ENCODE measurements at regions of chr18 and their contacts with region 1.

Region 1: DNA sequence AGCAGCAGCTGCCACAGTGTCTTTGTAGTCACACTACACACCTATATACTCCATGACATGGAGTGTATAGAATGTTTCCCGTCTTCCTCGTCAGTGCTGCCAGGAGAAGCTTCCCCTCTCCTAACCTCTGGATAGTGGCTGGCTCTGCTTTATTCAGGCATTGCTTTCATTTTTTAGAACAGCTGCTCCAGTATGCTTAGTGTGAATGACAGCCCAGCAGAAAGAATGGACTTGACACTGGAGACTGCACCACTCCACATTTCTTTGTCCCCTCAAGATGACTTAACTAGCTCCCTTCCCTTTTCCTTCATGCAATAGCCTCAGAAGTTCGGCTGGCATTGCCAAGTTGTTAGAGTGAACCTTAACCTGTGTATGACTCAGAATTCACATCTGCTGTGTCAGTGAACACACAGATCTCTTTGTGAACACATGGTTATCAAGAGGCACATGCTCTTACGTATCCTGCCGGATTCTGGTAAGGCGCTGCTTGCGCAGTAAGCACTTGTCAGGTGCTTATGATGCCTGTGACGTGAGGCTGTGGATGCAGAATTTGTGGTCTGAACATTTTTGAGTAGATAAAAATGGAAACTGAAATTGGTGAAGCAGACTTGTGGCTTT is 73.9 kb downstream of the NEDD4L start:
- DNase-seq: no peak
- ATAC-seq: no peak
- H3K4me3 ChIP-seq: no peak overlapping the region
- H3K4me3 Mint-ChIP-seq: no peak overlapping the region
- H3K27ac ChIP-seq: no peak overlapping the region
- H3K27ac Mint-ChIP-seq: no peak overlapping the region
- H3K4me1 ChIP-seq: no peaks in the 10 kb centered on the region
- H3K4me1 Mint-ChIP-seq: peaks cover 4% of the 10 kb centered on the region
- H3K27me3 ChIP-seq: no peaks in the 10 kb centered on the region
- H3K27me3 Mint-ChIP-seq: no peaks in the 10 kb centered on the region
- CTCF ChIP-seq: no peak

Region 2: GRCh38 chr18:57035590-57035989 is 1082.3 kb before region 1 on chr18:
- CTCF ChIA-PET with region 1: no interaction called
- POLR2A ChIA-PET with region 1: no interaction called
- intact Hi-C with region 1: no loop called
- DNase-seq: no peak
- ATAC-seq: no peak
- H3K4me3 ChIP-seq: no peak overlapping the region
- H3K4me3 Mint-ChIP-seq: no peak overlapping the region
- H3K27ac ChIP-seq: no peak overlapping the region
- H3K27ac Mint-ChIP-seq: no peak overlapping the region
- H3K4me1 ChIP-seq: no peaks in the 10 kb centered on the region
- H3K4me1 Mint-ChIP-seq: no peaks in the 10 kb centered on the region
- H3K27me3 ChIP-seq: no peaks in the 10 kb centered on the region
- H3K27me3 Mint-ChIP-seq: peaks cover 4% of the 10 kb centered on the region
- CTCF ChIP-seq: no peak

Region 3: GRCh38 chr18:57630002-57630753 is 487.7 kb before region 1 on chr18:
- CTCF ChIA-PET with region 1: no interaction called
- POLR2A ChIA-PET with region 1: no interaction called
- intact Hi-C with region 1: loop called in 1 of 2 experiments (anchors 1 kb)
- DNase-seq: peak; percentile 86 to 96 (median 95)
- ATAC-seq: peak; percentile 99
- H3K4me3 ChIP-seq: peak overlapping the region; percentile 71 to 90
- H3K4me3 Mint-ChIP-seq: peak overlapping the region; percentile 97
- H3K27ac ChIP-seq: peak overlapping the region; percentile 46 to 59
- H3K27ac Mint-ChIP-seq: peak overlapping the region; percentile 92
- H3K4me1 ChIP-seq: peaks cover 15% of the 10 kb centered on the region
- H3K4me1 Mint-ChIP-seq: peaks cover 16% of the 10 kb centered on the region
- H3K27me3 ChIP-seq: no peaks in the 10 kb centered on the region
- H3K27me3 Mint-ChIP-seq: no peaks in the 10 kb centered on the region
- CTCF ChIP-seq: peak; percentile 70

Region 4: DNA sequence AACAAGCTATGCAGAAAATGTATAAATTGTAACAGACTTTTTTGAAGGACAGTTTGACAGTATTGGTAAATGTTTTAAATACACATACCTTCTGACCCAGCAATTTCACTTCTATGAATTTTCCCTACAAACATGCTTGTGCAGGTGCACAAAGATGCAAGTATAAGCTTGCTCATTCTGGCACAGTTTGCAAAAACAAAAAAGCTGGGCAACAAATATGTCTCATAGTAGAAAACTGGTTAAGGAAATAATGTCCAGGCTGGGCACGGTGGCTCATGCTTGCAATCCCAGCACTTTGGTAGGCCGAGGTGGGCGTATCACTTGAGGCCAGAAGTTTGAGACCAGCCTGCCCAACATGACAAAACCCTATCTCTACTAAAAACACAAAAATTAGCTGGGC is 170.8 kb before region 1 on chr18:
- CTCF ChIA-PET with region 1: no interaction called
- POLR2A ChIA-PET with region 1: no interaction called
- intact Hi-C with region 1: no loop called
- DNase-seq: no peak
- ATAC-seq: no peak
- H3K4me3 ChIP-seq: no peak overlapping the region
- H3K4me3 Mint-ChIP-seq: no peak overlapping the region
- H3K27ac ChIP-seq: no peak overlapping the region
- H3K27ac Mint-ChIP-seq: no peak overlapping the region
- H3K4me1 ChIP-seq: no peaks in the 10 kb centered on the region
- H3K4me1 Mint-ChIP-seq: no peaks in the 10 kb centered on the region
- H3K27me3 ChIP-seq: no peaks in the 10 kb centered on the region
- H3K27me3 Mint-ChIP-seq: peaks cover 5% of the 10 kb centered on the region
- CTCF ChIP-seq: no peak

Region 5: DNA sequence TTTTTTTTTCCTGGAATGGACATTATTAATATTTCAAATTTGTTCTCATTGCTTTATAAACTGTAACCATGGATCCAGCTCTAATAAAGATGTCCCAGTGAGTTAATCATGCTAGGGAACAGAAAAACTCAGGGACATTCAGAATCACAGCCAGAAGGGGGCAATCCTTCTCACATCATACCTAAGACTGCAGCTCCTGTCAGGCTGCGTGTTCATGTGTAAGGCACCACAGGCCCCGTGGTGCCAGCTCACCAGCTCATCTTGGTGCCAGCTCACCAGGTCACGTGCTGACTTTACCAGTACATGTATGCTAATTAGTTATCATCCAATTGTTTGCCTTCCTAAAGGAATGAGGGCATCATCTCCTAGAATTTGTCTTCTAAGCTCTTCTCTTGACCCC is 158.6 kb before region 1 on chr18:
- CTCF ChIA-PET with region 1: interaction called, 4 read pairs
- POLR2A ChIA-PET with region 1: no interaction called
- intact Hi-C with region 1: loop called (anchors 1 to 5 kb)
- DNase-seq: peak in 2 of 9 experiments; percentile 8 to 38
- ATAC-seq: peak; percentile 31
- H3K4me3 ChIP-seq: no peak overlapping the region
- H3K4me3 Mint-ChIP-seq: no peak overlapping the region
- H3K27ac ChIP-seq: no peak overlapping the region
- H3K27ac Mint-ChIP-seq: no peak overlapping the region
- H3K4me1 ChIP-seq: no peaks in the 10 kb centered on the region
- H3K4me1 Mint-ChIP-seq: no peaks in the 10 kb centered on the region
- H3K27me3 ChIP-seq: no peaks in the 10 kb centered on the region
- H3K27me3 Mint-ChIP-seq: peaks cover 14% of the 10 kb centered on the region
- CTCF ChIP-seq: no peak